ENCODE measurements at regions of chr2 and their contacts with region 1.

Region 1: DNA sequence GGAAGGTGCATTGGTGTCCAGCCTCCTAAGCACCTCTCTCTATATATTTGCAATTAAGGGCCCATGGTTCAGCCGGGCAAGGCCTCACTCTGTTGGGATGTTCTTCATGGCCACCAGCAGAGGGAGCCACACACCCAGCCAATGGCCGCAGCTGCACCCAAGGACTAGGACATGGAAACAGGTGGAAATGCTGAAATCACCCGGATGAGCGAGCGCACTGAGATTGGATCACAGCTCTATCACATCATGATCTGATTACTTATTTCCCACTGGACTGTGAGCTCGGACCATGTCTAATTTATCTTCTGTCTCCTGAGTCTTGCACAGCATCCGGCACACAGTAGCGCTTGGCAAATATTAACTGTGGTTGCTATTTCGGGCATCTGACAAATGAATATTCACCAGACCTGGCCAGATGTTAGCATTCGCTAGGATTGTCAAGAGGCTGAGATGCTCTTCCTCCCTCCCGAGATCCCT is 31.2 kb downstream of the KIF3C start:
- DNase-seq: peak; percentile 70 to 90
- ATAC-seq: peak; percentile 96 to 99 (median 98)
- H3K4me3 ChIP-seq: peak overlapping the region; percentile 37
- H3K27ac ChIP-seq: peak overlapping the region; percentile 46
- H3K4me1 ChIP-seq: no peaks in the 10 kb centered on the region
- H3K27me3 ChIP-seq: no peaks in the 10 kb centered on the region
- CTCF ChIP-seq: peak; percentile 98

Region 2: DNA sequence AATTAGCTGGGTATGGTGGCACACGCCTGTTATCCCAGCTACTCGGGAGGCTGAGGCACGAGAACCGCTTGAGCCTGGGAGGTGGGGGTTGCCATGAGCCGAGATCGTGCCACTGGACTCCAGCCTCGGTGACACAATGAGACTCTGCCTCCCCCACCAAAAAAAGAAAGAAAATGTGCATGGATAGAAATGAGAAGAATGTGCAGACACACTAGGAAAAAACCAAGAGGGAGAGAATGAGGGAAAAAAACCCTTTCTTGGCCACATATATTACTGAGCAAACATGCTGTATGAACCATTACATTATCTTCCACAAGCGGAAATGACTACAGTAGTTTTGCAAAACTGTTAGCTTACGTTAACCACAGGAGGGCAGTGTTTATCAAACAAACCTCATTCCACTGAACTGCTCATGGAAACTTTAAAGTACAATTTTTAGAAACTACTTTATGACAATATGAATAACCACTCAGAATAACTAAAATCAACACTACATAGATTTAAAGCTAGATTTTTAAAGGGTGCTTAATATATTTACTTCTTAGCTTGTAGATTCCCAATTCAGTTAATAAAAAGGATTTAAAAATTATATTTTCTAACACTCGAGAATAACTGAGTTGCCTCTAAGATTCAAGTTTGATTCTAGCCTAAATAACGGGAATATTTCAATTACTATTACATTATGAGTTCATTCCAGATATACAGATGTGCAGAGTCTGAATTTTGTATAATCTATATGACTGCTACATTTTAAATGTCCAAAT is 99.2 kb before region 1 on chr2:
- intact Hi-C with region 1: loop called in 1 of 2 experiments (anchors 5 kb)
- DNase-seq: no peak
- ATAC-seq: peak; percentile 75 to 87 (median 83)
- H3K4me3 ChIP-seq: peak overlapping the region; percentile 12
- H3K27ac ChIP-seq: peak overlapping the region; percentile 73
- H3K4me1 ChIP-seq: peaks cover 45% of the 10 kb centered on the region
- H3K27me3 ChIP-seq: no peaks in the 10 kb centered on the region
- CTCF ChIP-seq: peak; percentile 74

Region 3: GRCh38 chr2:25933622-25934021 is 17.5 kb before region 1 on chr2:
- intact Hi-C with region 1: loop called in 1 of 2 experiments (anchors 1 kb)
- DNase-seq: no peak
- ATAC-seq: no peak
- H3K4me3 ChIP-seq: no peak overlapping the region
- H3K27ac ChIP-seq: no peak overlapping the region
- H3K4me1 ChIP-seq: peaks cover 20% of the 10 kb centered on the region
- H3K27me3 ChIP-seq: no peaks in the 10 kb centered on the region
- CTCF ChIP-seq: no peak

Measured in psoas muscle (tissue), 8 donors.